ENCODE measurements at regions of chrX and their contacts with region 1.

Region 1: DNA sequence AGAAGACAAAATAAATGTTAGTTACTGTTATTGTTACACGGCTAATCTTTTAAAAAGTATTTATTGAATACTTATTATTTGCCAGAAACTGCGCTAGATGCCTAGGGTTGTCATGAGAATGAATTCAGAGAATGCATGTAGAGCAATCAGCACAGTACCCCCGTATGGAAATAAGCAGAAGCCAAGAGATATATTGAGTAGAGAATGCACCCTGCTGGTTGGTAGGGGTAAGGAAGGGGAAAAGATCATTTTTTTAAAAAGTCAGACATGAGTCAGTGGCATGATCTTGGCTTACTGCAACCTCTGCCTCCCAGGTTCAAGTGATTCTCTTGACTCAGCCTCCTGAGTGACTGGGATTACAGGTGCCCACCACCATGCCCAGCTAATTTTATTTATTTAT is 13.1 kb upstream of the DRP2 start:
- DNase-seq: no peak
- ATAC-seq: no peak

Region 2: GRCh38 chrX:100895365-100896075 is 311.0 kb before region 1 on chrX:
- intact Hi-C with region 1: loop called (anchors 2 kb)
- DNase-seq: no peak
- ATAC-seq: no peak